GM12878 (cell line): ENCODE measurements at regions of chr1 and their contacts with region 1.

Region 1: GRCh38 chr1:159229486-159229885 is 24.8 kb downstream of the ACKR1 start:
- DNase-seq: no peak
- ATAC-seq: no peak
- H3K4me3 ChIP-seq: no peak overlapping the region
- H3K27ac ChIP-seq: no peak overlapping the region
- H3K4me1 ChIP-seq: no peaks in the 10 kb centered on the region
- H3K27me3 ChIP-seq: no peaks in the 10 kb centered on the region
- CTCF ChIP-seq: no peak
- EP300 ChIP-seq: no peak
- POLR2A ChIP-seq: no peak
- RAD21 ChIP-seq: no peak

Region 2: DNA sequence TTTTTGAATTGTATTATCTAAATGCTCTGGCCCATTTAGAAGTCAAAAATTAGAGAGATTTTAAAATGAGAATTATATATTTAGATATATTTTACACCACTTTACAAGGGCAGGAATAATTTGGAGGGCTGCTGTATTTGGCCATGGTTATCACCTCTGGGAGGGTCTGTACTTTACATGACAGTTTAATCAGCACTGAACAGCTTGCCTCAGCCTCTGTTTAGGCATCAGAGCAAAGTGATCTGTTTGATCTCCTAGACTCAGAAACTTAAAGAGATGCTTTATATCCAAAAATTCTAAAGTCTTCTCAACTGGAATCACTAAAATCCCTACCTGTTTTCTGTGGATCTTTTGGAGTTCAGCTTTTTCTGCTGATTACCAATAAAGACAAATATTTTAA is 537.6 kb before region 1 on chr1:
- CTCF ChIA-PET with region 1: no interaction called
- POLR2A ChIA-PET with region 1: no interaction called
- RAD21 ChIA-PET with region 1: no interaction called
- SMC1A ChIA-PET with region 1: no interaction called
- in situ Hi-C with region 1: no loop called
- intact Hi-C with region 1: loop called (anchors 5 kb)
- DNase-seq: no peak
- ATAC-seq: no peak
- H3K4me3 ChIP-seq: no peak overlapping the region
- H3K27ac ChIP-seq: no peak overlapping the region
- H3K4me1 ChIP-seq: no peaks in the 10 kb centered on the region
- H3K27me3 ChIP-seq: no peaks in the 10 kb centered on the region
- CTCF ChIP-seq: no peak
- EP300 ChIP-seq: no peak
- POLR2A ChIP-seq: no peak
- RAD21 ChIP-seq: no peak

Region 3: GRCh38 chr1:159188375-159188788 is 41.1 kb before region 1 on chr1:
- CTCF ChIA-PET with region 1: no interaction called
- POLR2A ChIA-PET with region 1: no interaction called
- RAD21 ChIA-PET with region 1: no interaction called
- SMC1A ChIA-PET with region 1: no interaction called
- in situ Hi-C with region 1: no loop called
- intact Hi-C with region 1: no loop called
- DNase-seq: no peak
- ATAC-seq: peak; percentile 91
- H3K4me3 ChIP-seq: no peak overlapping the region
- H3K27ac ChIP-seq: no peak overlapping the region
- H3K4me1 ChIP-seq: no peaks in the 10 kb centered on the region
- H3K27me3 ChIP-seq: peaks cover 4 to 6% of the 10 kb centered on the region in 2 experiments; a peak in 2 of 4 replicates
- CTCF ChIP-seq: no peak
- EP300 ChIP-seq: no peak
- POLR2A ChIP-seq: no peak
- RAD21 ChIP-seq: no peak

Region 4: DNA sequence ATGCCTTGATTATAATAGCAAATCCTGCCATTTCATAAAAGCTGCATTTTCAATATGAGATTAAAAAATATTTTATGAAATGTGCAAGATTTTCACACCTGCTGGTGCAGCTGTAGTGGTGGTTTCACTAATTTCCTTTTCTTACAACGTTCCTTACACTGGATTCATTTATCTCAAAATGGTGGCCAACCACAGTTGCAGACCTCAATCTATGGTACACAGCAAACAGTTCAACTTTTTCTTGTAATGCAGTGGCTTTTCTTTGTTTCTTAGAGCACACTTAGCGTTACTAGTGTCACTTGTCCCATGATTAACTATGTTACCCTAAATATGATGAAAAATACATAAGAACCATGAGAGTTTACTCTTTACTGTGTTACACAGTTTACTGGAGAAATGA is 105.3 kb after region 1 on chr1:
- CTCF ChIA-PET with region 1: no interaction called
- POLR2A ChIA-PET with region 1: no interaction called
- RAD21 ChIA-PET with region 1: no interaction called
- SMC1A ChIA-PET with region 1: no interaction called
- in situ Hi-C with region 1: no loop called
- intact Hi-C with region 1: no loop called
- DNase-seq: no peak
- ATAC-seq: no peak
- H3K4me3 ChIP-seq: no peak overlapping the region
- H3K27ac ChIP-seq: no peak overlapping the region
- H3K4me1 ChIP-seq: no peaks in the 10 kb centered on the region
- H3K27me3 ChIP-seq: no peaks in the 10 kb centered on the region
- CTCF ChIP-seq: no peak
- EP300 ChIP-seq: no peak
- POLR2A ChIP-seq: no peak
- RAD21 ChIP-seq: no peak